Activated naive CD4-positive, alpha-beta T cell treated with anti-CD3 and anti-CD28 coated beads for 36 hours (primary cell): ENCODE measurements at regions of chr2 and their contacts with region 1.

Region 1: DNA sequence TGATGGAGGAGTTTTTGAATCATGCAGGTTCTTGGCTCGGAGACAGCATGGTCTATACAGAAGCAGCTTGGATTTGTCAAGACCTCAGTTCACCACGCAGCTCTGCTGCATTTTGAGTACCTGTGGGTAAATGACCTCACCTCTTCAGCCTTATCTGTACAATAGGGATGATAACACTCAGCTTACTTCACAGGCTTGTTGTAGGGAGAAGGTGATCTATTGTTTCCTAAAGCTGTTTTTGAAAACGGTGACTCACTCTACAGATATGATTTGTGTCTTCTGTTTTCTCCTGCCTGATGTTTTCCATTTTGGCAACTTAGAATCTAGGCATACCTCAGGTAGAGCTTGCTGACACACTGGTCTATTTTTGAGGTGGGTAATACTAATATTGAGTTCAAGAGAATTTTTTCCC is 80.3 kb downstream of the FMNL2 start:
- DNase-seq: peak; percentile 60
- H3K4me3 Mint-ChIP-seq: no peak overlapping the region
- H3K27ac Mint-ChIP-seq: peak overlapping the region; percentile 78
- H3K4me1 Mint-ChIP-seq: peaks cover 40% of the 10 kb centered on the region
- H3K27me3 Mint-ChIP-seq: peaks cover 29% of the 10 kb centered on the region

Region 2: DNA sequence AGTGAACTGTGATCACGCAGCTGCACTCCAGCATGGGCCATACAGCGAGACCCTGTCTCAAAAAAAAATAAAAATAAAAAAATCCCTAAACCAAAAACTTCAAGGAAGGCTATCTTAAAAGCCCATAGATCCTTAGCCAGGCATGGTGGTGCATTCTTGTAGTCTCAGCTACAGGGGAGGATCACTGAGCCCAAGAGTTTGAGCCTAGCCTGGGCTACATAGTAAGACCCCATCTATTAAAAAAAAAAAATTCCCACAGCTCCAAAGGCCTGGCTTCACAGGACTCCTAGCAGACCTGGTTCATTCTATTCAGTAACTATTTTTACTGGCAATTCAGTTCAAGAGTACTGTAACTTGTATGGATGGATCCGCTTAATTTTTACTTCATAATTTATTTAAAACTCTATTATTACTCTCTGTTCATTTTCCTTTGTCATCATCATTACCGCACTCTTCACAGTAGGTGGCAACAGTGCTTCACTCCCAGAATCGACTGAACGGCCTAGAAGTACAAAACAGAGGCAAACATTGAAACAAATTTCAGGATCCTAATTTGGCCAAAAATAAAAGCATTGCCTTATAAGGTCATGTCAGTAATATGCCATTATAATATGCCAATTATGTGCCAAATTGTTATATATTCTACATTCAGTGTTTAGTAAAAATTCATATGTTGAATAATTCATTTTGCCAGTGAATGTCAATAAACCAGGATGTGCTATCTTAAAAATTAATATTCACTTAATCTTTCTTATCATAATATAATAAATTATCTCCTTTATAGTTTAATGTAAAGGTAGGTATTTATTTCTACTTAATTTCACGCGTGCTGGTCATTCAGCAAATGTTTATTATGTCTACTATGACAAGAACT is 225.4 kb before region 1 on chr2:
- CTCF ChIA-PET with region 1: interaction called, 3 read pairs
- intact Hi-C with region 1: loop called (anchors 2 kb)
- DNase-seq: peak; percentile 49
- H3K4me3 Mint-ChIP-seq: no peak overlapping the region
- H3K27ac Mint-ChIP-seq: no peak overlapping the region
- H3K4me1 Mint-ChIP-seq: peaks cover 5% of the 10 kb centered on the region
- H3K27me3 Mint-ChIP-seq: peaks cover 17% of the 10 kb centered on the region

Region 3: GRCh38 chr2:152335010-152335725 is 80.1 kb before region 1 on chr2 and contains the start of gene FMNL2:
- CTCF ChIA-PET with region 1: interaction called, 3 read pairs
- intact Hi-C with region 1: loop called (anchors 1 kb)
- DNase-seq: peak; percentile 64
- H3K4me3 Mint-ChIP-seq: peak within 1 kb of the TSS; percentile 80
- H3K27ac Mint-ChIP-seq: no peak within 1 kb of the TSS
- H3K4me1 Mint-ChIP-seq: peaks cover 8% of the 10 kb centered on the region
- H3K27me3 Mint-ChIP-seq: peaks cover 41% of the 10 kb centered on the region
- total RNA-seq, gene FMNL2: 2.5 to 2.7 TPM

Region 4: GRCh38 chr2:152347076-152347475 is 68.2 kb before region 1 on chr2:
- CTCF ChIA-PET with region 1: no interaction called
- intact Hi-C with region 1: no loop called
- DNase-seq: no peak
- H3K4me3 Mint-ChIP-seq: no peak overlapping the region
- H3K27ac Mint-ChIP-seq: no peak overlapping the region
- H3K4me1 Mint-ChIP-seq: no peaks in the 10 kb centered on the region
- H3K27me3 Mint-ChIP-seq: peaks cover 4% of the 10 kb centered on the region

Region 5: GRCh38 chr2:152445791-152446201 is 30.6 kb after region 1 on chr2:
- CTCF ChIA-PET with region 1: no interaction called
- intact Hi-C with region 1: loop called (anchors 1 kb)
- DNase-seq: peak; percentile 26
- H3K4me3 Mint-ChIP-seq: no peak overlapping the region
- H3K27ac Mint-ChIP-seq: no peak overlapping the region
- H3K4me1 Mint-ChIP-seq: peaks cover 19% of the 10 kb centered on the region
- H3K27me3 Mint-ChIP-seq: peaks cover 24% of the 10 kb centered on the region